IMR-90 (cell line): ENCODE measurements at regions of chr4 and their contacts with region 1.

Region 1: GRCh38 chr4:113979148-113979904 is at the start of gene ARSJ:
- DNase-seq: peak; percentile 88
- ATAC-seq: peak; percentile 71
- H3K4me3 ChIP-seq: peak within 1 kb of the TSS; percentile 73
- H3K27ac ChIP-seq: peak within 1 kb of the TSS; percentile 98
- H3K4me1 ChIP-seq: peaks cover 8% of the 10 kb centered on the region
- H3K27me3 ChIP-seq: no peaks in the 10 kb centered on the region
- CTCF ChIP-seq: 0 out of 2 replicates have a peak, but pooled peaks have one; percentile 18
- POLR2A ChIP-seq: peak; percentile 74; the same call in 1 of the 2 replicates
- RAD21 ChIP-seq: peak; percentile 1; the same call in 1 of the 2 replicates
- total RNA-seq, gene ARSJ: 126 and 143 TPM in 2 replicates

Region 2: DNA sequence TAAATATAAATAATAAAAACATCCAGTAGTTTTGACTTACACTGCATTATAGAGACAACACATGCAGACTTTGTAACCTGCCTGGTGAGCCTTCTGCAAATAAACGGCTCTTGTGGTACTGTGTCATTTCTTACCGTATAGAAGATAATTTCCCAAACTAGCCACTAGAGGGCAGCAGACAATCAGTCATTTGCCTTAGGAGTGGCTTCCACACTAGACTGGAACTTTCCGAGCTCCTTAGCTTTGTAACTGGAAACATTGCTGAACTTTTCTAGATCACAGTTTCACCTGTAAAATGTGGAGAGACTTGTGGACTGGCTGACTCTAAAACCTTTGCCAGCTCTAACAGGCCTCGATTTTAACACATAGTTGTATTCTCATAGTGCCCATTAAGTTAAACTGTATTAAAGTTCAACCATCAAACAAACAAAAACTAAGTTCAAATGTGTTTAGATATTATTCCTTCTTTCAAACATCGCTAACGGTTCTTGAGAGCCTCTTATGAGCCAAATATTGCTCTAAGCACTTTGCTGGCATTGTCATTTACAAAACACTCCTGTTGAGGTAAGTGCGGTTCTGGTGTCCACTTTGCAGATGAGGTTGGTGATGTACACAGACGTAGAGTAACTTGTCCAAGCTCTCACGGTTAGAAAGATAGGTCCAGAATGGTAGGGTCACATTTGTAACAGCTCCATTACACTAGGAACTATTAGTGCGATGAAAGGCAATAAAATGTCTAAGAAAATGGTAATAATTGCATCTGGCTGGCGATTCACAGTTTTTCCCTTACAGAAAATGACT is 584.4 kb before region 1 on chr4:
- CTCF ChIA-PET with region 1: interaction called, 3 read pairs
- POLR2A ChIA-PET with region 1: no interaction called
- dilution Hi-C with region 1: no loop called
- in situ Hi-C with region 1: no loop called
- intact Hi-C with region 1: loop called (anchors 5 kb)
- DNase-seq: peak; percentile 88
- ATAC-seq: peak; percentile 89
- H3K4me3 ChIP-seq: no peak overlapping the region
- H3K27ac ChIP-seq: no peak overlapping the region
- H3K4me1 ChIP-seq: peaks cover 3% of the 10 kb centered on the region; the same call in 1 of the 2 replicates
- H3K27me3 ChIP-seq: no peaks in the 10 kb centered on the region
- CTCF ChIP-seq: peak; percentile 88
- POLR2A ChIP-seq: peak; percentile 41; the same call in 1 of the 2 replicates
- RAD21 ChIP-seq: peak; percentile 96

Region 3: DNA sequence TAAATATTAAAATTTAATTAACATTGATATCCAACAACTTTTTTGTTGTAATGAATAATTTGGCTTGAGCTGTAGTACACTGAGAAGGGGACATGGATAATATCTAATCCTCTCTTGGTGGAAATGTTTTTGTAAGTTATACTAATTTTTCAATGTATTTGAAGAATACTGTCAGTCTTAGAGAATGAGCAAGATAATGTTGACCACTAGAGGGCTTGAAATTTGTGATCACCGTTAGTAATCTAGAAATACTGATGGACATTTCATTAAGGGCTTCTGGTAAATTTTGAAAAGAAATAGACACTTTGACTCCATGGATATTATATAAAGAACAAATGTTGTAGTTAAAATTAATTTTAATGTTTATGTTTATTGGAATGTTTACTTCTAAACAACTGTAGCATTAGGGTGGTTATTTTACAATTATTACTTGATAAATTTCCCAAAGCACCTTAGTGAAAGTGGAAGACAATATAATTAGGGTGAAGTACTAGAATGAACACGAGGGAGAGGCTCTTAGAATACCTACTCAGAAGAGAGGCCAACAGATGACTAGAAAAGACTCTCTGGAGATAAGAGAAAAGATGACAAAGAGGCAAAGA is 197.8 kb before region 1 on chr4:
- CTCF ChIA-PET with region 1: no interaction called
- POLR2A ChIA-PET with region 1: interaction called, 3 read pairs
- dilution Hi-C with region 1: no loop called
- in situ Hi-C with region 1: no loop called
- intact Hi-C with region 1: loop called (anchors 5 kb)
- DNase-seq: peak; percentile 55
- ATAC-seq: no peak
- H3K4me3 ChIP-seq: no peak overlapping the region
- H3K27ac ChIP-seq: no peak overlapping the region
- H3K4me1 ChIP-seq: peaks cover 4% of the 10 kb centered on the region
- H3K27me3 ChIP-seq: no peaks in the 10 kb centered on the region
- CTCF ChIP-seq: peak; percentile 66
- POLR2A ChIP-seq: no peak
- RAD21 ChIP-seq: peak; percentile 59

Region 4: GRCh38 chr4:113958766-113959538 is 20.4 kb before region 1 on chr4:
- CTCF ChIA-PET with region 1: interaction called, 3 read pairs
- POLR2A ChIA-PET with region 1: no interaction called
- dilution Hi-C with region 1: no loop called
- in situ Hi-C with region 1: no loop called
- intact Hi-C with region 1: loop called (anchors 2 kb)
- DNase-seq: peak; percentile 97
- ATAC-seq: peak; percentile 82
- H3K4me3 ChIP-seq: no peak overlapping the region
- H3K27ac ChIP-seq: peak overlapping the region; percentile 91
- H3K4me1 ChIP-seq: peaks cover 13% of the 10 kb centered on the region
- H3K27me3 ChIP-seq: no peaks in the 10 kb centered on the region
- CTCF ChIP-seq: no peak
- POLR2A ChIP-seq: peak; percentile 48; the same call in 1 of the 2 replicates
- RAD21 ChIP-seq: no peak

Region 5: GRCh38 chr4:114193624-114194399 is 214.5 kb after region 1 on chr4:
- CTCF ChIA-PET with region 1: no interaction called
- POLR2A ChIA-PET with region 1: interaction called, 13 read pairs
- dilution Hi-C with region 1: no loop called
- in situ Hi-C with region 1: no loop called
- intact Hi-C with region 1: no loop called
- DNase-seq: peak; percentile 29
- ATAC-seq: peak; percentile 60
- H3K4me3 ChIP-seq: no peak overlapping the region
- H3K27ac ChIP-seq: no peak overlapping the region
- H3K4me1 ChIP-seq: no peaks in the 10 kb centered on the region
- H3K27me3 ChIP-seq: no peaks in the 10 kb centered on the region
- CTCF ChIP-seq: no peak
- POLR2A ChIP-seq: no peak
- RAD21 ChIP-seq: no peak

Region 6: DNA sequence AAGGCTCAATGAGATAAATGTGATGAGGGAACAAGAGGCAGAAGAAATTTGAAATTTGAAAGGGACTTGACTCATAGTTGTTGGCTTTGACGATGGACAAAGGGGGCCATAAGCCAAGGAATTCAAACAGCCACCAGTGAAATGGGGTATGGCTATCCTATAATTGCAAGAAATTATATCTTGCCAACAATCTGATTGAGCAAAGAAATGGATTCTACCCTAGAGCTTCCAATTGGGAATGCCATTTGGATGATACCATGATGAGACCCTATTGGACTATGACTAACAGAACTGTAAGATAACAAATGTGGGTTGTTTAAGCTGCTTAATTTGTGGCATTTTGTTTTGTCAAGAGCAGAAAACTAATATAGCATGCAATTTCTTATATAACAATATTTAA is 270.2 kb after region 1 on chr4:
- CTCF ChIA-PET with region 1: no interaction called
- POLR2A ChIA-PET with region 1: no interaction called
- dilution Hi-C with region 1: no loop called
- in situ Hi-C with region 1: no loop called
- intact Hi-C with region 1: no loop called
- DNase-seq: no peak
- ATAC-seq: no peak
- H3K4me3 ChIP-seq: no peak overlapping the region
- H3K27ac ChIP-seq: no peak overlapping the region
- H3K4me1 ChIP-seq: peaks cover 10% of the 10 kb centered on the region
- H3K27me3 ChIP-seq: no peaks in the 10 kb centered on the region
- CTCF ChIP-seq: no peak
- POLR2A ChIP-seq: no peak
- RAD21 ChIP-seq: no peak

Region 7: GRCh38 chr4:114272226-114272625 is 292.9 kb after region 1 on chr4:
- CTCF ChIA-PET with region 1: no interaction called
- POLR2A ChIA-PET with region 1: no interaction called
- dilution Hi-C with region 1: no loop called
- in situ Hi-C with region 1: no loop called
- intact Hi-C with region 1: loop called (anchors 5 kb)
- DNase-seq: peak; percentile 99
- ATAC-seq: peak; percentile 89
- H3K4me3 ChIP-seq: no peak overlapping the region
- H3K27ac ChIP-seq: peak overlapping the region; percentile 69
- H3K4me1 ChIP-seq: no peaks in the 10 kb centered on the region; the same call in 1 of the 2 replicates
- H3K27me3 ChIP-seq: no peaks in the 10 kb centered on the region
- CTCF ChIP-seq: no peak
- POLR2A ChIP-seq: no peak
- RAD21 ChIP-seq: no peak

Region 8: DNA sequence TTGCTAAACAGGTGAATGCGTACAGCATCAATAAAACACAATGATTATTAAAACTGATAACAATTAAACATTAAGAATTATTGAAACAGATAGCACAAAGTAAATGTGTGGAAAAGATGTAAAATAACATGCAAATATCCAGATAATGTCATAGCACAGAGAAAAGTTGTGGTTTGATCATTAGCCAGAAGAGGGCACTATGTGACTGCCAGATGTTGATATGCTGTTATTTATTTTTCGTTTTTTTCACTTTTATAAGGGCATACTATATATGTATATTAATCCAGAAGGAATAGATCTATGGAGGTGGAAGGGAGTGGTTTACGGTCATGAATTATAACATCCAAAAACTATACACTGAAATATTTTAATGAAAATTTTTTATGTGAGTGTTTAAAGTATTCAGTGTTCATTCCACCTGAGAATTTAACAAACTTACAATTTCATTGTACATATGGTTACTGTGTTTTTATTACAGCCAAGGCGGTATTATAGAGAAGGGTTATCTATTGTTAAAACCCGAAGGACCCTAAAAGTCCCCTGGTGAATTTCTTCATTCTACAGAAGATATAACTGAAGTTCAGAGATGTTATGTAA is 407.4 kb after region 1 on chr4:
- CTCF ChIA-PET with region 1: no interaction called
- POLR2A ChIA-PET with region 1: no interaction called
- dilution Hi-C with region 1: no loop called
- in situ Hi-C with region 1: loop called (anchors 5 kb)
- intact Hi-C with region 1: no loop called
- DNase-seq: peak; percentile 60
- ATAC-seq: peak; percentile 51; the same call in 1 of the 2 replicates
- H3K4me3 ChIP-seq: no peak overlapping the region
- H3K27ac ChIP-seq: no peak overlapping the region
- H3K4me1 ChIP-seq: peaks cover 4% of the 10 kb centered on the region; the same call in 1 of the 2 replicates
- H3K27me3 ChIP-seq: peaks cover 18% of the 10 kb centered on the region
- CTCF ChIP-seq: peak; percentile 85
- POLR2A ChIP-seq: no peak
- RAD21 ChIP-seq: peak; percentile 85